Right ventricle myocardium superior (tissue), 1 donor: ENCODE measurements at regions of chr11 and their contacts with region 1.

Region 1: DNA sequence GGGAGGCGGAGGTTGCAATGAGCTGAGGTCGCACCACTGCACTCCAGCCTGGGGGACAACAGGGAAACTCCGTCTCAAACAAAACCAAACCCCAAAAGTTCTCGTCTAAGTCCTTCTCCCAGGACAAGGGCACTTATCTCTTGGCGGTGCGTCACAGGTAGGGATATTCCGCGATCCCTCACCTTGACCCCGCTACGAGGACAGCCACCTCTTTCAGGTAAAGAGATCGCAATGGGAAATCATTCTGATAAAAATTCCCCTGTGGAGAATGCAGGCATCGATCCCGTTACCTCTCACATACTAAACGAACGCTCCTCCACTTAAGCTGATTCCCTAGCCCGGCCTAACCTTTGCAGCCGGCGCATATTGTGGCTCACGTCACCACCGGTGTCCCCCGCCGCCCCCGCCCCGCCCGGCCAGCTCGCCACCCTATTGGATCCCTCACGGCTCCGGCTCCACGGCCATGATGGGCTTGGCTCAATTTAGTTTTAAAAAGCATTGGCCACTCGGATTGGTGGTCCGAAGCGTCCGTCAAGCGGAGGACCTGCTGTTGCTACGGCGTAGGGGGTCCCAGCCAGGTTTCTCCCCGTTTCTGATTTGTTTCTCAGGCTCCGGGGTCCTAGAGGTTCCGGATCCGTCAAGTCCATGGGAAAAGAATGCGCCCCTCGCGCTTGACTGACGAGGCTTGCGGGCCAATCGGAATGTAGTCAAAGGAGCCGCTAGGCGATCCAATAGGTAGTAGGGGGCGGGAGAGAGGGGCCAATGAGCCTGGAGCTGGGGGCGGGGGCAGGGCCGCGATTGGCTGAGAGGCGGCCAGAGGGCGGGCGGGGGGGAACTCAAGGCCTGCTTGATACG is 439 bp upstream of the PPP6R3 start:
- DNase-seq: peak; percentile 97
- ATAC-seq: peak; percentile 93

Region 2: DNA sequence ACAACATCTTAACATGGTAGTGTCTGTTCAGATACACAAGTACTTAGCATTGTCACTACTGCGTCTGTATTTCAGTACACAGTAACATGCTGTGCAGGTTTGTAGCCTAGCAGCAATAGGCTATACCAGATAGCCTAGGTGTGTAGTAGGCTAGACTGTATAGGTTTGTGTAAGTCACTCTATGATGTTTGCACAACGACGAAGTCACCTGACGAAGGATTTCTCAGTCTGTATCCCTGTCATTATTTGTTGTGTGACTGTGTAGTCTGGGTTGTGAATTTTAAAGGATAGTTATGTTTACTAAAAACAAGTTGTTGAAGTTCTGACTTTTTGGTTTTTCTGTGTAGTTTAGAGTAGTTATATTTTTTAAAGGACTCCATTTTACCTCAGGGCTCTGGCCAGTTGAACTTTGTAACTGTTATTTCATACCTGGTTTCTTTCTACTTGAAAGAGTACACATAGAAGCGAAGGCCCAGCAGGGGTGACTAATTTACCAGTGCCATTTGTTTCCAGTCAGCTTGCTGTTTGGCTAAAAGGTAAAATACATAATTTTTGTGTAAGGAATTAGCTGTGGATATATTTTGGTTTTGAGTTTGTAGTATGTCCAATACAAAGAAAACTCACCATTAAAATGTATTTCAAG is 72.7 kb after region 1 on chr11:
- intact Hi-C with region 1: loop called (anchors 10 kb)
- DNase-seq: no peak
- ATAC-seq: no peak

Region 3: DNA sequence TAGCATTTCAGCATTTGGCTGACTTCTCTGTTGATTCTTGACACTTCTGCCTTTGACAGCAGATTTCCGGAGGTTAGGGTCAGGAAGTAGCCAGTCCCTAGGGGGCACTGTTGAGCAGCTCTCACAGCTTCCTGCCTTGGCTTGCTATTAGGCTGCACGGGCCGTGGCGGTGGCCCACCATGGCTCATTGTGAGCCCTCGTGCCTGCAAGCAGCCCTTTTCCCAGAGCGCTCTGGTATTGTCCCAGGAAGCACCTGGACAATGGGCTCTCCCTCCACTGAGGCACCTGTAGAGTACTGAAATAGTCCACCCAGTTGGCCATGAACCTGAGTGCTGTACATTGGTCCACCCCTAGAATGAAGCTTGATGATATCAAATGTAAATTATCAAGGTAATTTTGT is 124.0 kb after region 1 on chr11:
- intact Hi-C with region 1: loop called (anchors 10 kb)
- DNase-seq: peak; percentile 47
- ATAC-seq: no peak

Region 4: DNA sequence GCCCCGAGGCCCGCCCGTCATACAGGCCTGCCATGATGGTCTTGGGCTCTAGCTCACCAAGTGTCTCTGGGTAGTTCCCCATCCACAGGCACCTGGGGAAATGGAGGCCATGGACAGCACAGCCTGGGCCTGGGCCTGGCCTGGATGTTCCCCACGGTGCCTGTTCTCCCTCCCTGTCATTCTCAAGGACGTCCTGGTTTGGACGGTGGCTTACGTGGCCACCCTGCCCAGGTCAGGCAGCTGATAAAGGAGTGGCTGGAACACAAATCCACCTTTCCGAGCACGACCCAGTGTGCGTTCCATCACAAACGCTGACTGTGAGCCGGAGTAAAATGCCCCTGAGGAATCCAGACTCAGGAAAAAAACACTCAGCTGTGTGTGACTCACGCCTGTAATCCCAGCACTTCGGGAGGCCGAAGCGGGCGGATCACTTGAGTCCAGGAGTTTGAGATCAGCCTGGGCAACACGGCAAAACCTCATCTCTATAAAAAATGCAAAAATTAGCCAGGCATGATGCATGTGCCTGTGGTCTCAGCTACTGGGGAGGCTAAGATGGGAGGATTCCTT is 332.4 kb after region 1 on chr11:
- intact Hi-C with region 1: no loop called
- DNase-seq: no peak
- ATAC-seq: peak; percentile 30